Activated CD4-positive, alpha-beta T cell treated with anti-CD3 and anti-CD28 coated beads for 36 hours (primary cell): ENCODE measurements at regions of chrX and their contacts with region 1.

Region 1: GRCh38 chrX:152926279-152926678 is 28.4 kb downstream of the ZNF185 start:
- DNase-seq: peak; percentile 78
- ATAC-seq: peak; percentile 96
- H3K4me3 Mint-ChIP-seq: no peak overlapping the region
- H3K27ac Mint-ChIP-seq: no peak overlapping the region
- H3K4me1 Mint-ChIP-seq: peaks cover 9% of the 10 kb centered on the region
- H3K27me3 Mint-ChIP-seq: no peaks in the 10 kb centered on the region

Region 2: DNA sequence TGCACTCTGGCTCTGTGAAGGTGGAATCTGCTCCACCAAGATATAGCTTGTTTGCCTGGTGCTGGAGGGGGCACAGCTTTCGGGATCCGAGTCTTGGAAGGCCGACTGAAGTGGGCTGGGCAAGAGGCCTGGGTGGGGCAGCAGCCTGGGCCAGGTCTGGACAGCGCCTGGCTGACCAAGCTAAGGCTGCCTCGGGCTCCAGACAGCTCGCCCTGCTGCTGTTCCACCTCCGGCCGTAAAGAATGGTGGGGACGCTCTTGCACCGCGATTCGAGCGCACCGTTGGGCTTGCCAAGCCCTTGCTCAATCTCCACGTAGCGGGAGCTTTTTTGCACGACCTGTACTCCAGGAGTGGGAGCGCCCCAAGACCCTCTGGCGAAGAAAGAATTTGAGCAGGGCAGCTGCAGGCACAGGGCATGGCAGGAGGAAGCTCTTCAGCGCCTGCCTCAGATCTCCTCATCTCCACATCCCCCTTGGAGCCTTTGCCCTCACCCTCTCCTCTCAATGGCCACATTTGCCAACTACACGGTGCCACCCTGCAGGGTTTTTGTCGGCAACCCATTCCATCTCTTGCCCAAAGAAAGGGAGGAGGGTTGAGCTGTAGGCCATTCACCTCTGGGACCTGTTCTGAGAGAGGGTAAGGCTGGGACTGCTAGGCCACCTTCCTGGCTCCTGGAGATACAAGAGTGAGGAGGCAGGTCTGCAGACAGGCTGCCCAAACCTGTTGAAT is 1172.8 kb before region 1 on chrX:
- CTCF ChIA-PET with region 1: no interaction called
- POLR2A ChIA-PET with region 1: no interaction called
- intact Hi-C with region 1: loop called in 1 of 2 experiments (anchors 2 kb)
- DNase-seq: peak; percentile 44
- ATAC-seq: peak; percentile 51
- H3K4me3 Mint-ChIP-seq: no peak overlapping the region
- H3K27ac Mint-ChIP-seq: no peak overlapping the region
- H3K4me1 Mint-ChIP-seq: no peaks in the 10 kb centered on the region
- H3K27me3 Mint-ChIP-seq: peaks cover 3% of the 10 kb centered on the region

Region 3: GRCh38 chrX:152632445-152633097 is 293.7 kb before region 1 on chrX:
- CTCF ChIA-PET with region 1: no interaction called
- POLR2A ChIA-PET with region 1: no interaction called
- intact Hi-C with region 1: loop called in 1 of 2 experiments (anchors 10 kb)
- DNase-seq: peak; percentile 58
- ATAC-seq: no peak
- H3K4me3 Mint-ChIP-seq: no peak overlapping the region
- H3K27ac Mint-ChIP-seq: no peak overlapping the region
- H3K4me1 Mint-ChIP-seq: no peaks in the 10 kb centered on the region
- H3K27me3 Mint-ChIP-seq: peaks cover 14% of the 10 kb centered on the region

Region 4: DNA sequence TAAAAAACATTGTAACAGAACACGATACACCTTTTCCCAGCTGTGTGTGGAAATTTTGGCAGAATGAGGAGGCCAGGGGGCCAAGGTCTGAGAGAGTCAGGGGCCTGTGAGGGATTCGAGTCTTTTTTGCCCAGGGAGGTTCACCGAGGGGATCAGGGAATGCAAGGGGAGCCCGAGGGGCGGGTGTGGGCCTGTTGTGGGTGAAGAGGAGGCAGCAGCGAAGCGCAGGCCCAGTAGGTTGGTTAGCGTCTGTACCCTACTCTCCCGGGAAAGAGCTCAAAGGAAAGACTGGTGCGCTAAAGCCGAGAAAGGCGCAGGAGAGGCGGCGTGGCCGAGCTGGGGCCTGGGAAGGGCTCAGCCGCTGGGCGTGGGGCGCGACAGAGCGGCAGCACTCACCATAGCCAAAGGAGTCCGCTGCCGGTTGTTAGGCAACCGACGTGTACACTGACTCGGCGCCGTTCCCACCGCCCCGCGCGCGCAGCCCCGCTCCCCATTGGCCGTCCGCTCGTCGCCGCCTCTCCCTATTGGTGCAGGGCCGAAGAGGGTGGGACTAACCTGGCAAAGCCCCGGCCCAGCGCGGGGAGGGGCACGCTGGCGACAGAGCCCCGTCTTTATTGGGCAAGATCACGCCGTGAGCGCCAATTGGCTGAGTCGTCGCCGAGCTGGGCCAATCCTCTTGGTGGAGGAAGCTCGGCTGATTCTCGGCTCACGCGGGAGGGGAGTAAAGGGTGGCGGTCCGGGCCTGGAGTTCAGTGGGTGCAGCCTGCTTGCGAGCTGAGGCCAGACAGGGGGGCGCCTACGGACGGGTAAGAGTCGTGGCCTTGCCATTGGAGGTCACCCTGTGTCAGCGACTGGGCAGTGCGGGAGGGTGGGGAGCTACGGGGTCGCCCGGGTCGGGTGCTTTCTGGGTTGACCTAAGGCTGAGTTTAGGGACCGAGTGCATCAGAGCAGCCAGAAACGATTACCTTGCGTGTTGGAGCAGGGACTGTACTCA is 95.7 kb before region 1 on chrX and contains the starts of genes CETN2 and NSDHL:
- CTCF ChIA-PET with region 1: no interaction called
- POLR2A ChIA-PET with region 1: no interaction called
- intact Hi-C with region 1: loop called in 1 of 2 experiments (anchors 5 kb)
- DNase-seq: peak; percentile 96
- ATAC-seq: peak; percentile 99
- H3K4me3 Mint-ChIP-seq: peak within 1 kb of the TSS; percentile 83
- H3K27ac Mint-ChIP-seq: peak within 1 kb of the TSS; percentile 78
- H3K4me1 Mint-ChIP-seq: peaks cover 19% of the 10 kb centered on the region
- H3K27me3 Mint-ChIP-seq: no peaks in the 10 kb centered on the region
- total RNA-seq, gene CETN2: 11.2 to 13.1 TPM
- total RNA-seq, gene NSDHL: 20.0 to 20.6 TPM